AG04449 (cell line): ENCODE measurements at regions of chr1 and their contacts with region 1.

Region 1: DNA sequence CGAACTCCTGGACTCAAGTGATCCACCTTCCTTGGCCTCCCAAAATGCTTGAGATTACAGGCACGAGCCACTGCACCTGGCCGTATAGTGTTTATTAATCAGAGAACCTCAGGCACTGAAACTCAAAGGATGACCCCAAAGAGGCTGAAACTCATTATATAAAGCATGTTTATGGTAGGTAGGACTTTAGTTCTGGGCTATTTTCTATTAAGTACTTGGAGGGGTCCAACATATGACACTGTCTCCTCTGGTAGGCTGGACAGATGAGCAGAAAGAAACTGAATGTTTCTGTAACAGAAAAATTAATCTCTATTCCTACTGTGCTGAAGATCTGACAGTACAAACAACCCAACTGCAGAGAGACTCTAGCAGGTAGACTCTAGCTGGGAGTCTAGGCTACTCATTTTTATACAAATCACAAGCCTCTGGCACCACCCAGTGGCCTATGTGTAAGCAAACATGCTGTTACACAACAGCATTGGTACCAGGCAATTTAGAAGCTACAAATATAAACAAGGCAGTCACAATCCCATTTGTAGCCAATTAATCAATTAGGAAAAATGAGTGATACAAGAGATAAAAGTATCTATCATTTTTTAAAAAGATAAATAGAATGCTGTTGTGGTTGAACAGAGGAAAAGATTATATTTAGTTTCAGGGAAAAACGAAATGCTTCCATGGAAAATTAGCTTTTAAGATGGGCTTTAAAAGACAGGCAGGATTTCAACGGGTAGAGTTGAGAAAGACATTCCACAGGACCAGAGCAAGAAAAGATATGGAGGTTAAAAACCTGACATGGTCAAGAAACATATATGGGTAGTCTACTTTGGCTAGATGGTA is 10.4 kb downstream of the DCAF8 start:
- DNase-seq: no peak
- H3K4me3 ChIP-seq: no peak overlapping the region
- CTCF ChIP-seq: peak; percentile 54

Region 2: DNA sequence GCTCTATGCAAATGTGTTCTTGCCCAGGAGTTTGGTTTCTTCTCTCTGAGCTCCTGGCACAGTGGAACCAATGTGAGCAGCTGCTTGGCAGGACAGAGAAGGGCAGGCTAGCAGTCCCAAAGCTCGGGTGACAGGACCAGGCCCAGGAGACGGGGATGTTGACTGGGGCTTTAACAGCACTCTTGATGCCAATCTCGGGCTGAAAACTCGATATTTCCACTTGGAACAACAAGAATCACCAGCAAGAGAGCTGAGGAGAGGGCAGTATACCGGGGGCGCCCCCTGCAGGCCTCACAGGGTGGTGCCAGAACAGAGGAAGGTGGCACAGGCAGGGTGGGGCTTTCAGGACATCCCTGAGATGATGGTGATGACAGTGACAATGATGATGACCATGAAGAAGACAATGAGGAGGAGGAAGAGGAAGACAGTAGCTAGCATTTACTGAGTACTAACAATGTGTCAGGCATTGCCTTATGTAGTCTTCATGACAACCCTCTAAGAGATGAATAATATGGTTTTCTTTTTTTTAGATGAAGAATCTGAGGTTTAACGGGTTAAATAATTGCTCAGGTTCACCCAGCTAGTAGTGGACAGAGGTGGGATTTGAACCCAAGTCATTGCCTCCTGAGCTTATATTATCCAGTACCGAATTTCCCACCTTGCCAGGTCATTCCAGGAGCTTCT is 173.3 kb before region 1 on chr1:
- CTCF ChIA-PET with region 1: interaction called, 147 read pairs
- POLR2A ChIA-PET with region 1: no interaction called
- DNase-seq: no peak
- H3K4me3 ChIP-seq: no peak overlapping the region
- CTCF ChIP-seq: peak; percentile 77

Region 3: DNA sequence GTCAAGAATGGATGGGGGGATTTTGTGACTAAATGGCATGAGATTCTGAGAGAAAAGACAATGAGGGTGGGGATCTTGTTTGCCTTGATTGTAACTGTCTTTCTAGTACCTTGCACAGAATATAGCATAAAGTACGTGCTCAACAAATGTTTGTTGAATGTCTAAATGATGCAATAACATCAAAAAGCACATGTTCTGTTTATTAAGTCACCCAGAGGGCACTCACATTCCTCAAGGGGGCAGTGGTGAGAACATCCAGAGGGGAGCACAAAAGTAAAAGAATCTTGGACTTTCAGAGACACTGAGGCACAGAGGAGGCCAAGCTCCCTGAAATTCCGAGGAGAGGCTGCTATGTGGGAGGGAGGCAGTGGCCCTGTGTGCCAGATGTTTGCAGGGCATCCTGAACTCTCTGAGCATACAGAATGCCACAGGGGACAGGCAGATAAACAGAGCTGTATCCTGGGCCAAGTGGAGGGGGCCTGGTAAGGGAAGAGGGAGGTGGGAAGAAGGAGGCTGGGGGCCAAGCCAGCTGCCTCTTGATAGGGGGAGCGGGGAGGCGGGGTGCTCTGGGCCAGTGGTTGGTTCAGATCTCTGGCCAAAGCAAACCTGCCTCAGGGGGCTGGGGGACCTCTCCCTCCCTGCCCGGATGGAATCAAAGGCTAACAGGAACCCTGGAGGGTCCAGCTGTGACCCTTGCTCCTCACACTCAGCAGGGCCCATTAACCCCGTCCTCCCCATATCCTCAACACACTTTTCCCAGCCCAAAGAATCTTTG is 142.8 kb before region 1 on chr1:
- CTCF ChIA-PET with region 1: interaction called, 171 read pairs
- POLR2A ChIA-PET with region 1: no interaction called
- DNase-seq: no peak
- H3K4me3 ChIP-seq: no peak overlapping the region
- CTCF ChIP-seq: peak; percentile 35

Region 4: DNA sequence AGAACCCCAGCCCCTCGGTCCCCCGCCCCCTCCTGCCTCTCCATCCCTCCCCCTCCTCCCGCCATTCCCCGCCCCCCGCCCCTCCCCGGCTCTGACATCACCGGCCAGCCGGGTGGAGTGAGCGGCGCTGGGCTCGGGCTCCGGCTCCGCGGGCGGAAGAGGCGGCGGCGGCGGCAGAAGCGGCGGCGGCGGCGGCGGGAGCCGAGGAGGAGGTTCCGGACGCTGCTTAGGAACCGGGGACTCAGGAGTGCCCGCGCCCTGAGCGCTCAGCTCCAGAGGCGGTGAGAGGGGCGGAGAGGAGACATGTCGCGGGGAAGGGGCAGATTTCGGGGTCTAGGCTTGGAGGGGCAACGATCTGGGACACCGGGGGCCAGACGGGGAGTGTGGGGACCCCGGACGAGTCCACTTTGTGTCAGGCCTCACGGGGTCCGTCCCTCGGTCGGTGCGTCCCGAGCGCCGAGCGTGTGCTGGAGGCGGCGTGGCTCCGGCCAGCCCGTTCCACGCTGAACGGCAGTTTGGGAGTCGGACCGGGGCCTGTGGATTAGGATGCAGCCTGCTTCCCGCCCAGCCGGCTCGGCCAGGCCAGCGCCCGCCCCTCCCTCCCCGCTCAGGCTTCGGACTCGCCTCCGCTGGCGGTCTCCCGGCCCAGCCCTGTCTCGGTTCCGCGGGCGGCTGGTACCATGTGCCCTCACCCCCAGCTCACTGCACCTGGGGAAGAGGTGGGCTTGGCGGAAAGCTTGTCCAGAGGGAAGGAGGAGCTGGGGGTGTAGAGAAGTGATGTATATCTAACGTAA is 46.5 kb before region 1 on chr1 and contains the start of gene PEA15:
- CTCF ChIA-PET with region 1: interaction called, 17 read pairs
- POLR2A ChIA-PET with region 1: no interaction called
- DNase-seq: no peak
- H3K4me3 ChIP-seq: peak within 1 kb of the TSS; percentile 96
- CTCF ChIP-seq: no peak

Region 5: GRCh38 chr1:160261893-160262794 is 10.2 kb after region 1 on chr1 and contains the start of gene DCAF8:
- CTCF ChIA-PET with region 1: interaction called, 34 read pairs
- POLR2A ChIA-PET with region 1: no interaction called
- DNase-seq: peak; percentile 76
- H3K4me3 ChIP-seq: peak within 1 kb of the TSS; percentile 99
- CTCF ChIP-seq: no peak